ENCODE measurements at regions of chr17 and their contacts with region 1.

Region 1: DNA sequence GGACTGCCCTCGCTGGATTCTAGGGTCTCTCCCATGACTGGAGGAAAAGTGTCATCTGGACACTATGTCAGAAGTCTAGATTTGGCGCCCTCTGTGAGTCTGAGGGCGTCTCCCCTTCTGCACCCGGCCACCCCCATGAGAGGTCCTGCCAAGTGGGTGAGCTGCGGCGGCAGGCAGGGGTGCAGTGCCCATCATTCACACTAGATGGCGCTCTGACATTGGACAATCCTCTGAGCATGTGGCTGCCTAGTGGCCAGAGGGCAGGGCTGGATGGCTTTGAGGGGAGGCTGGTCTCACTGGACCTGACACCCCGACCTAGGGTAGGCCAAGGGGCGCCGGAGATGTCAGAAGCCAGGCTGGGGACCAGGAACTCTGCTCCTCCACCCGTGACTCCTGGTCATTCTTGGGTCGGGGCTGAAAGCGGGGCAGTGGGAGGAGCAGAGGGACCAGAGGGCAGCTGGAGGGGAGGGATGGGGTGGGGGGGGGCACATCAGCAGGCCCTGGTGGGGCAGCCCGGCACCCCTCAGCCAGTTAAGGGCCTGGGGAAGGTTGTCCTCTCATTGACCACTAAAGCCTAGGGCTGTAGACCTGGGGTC is 28.0 kb downstream of the MRM1 start:
- DNase-seq: peak; percentile 12
- ATAC-seq: peak; percentile 99
- H3K4me3 ChIP-seq: no peak overlapping the region
- H3K27ac ChIP-seq: no peak overlapping the region
- H3K4me1 ChIP-seq: no peaks in the 10 kb centered on the region
- H3K27me3 ChIP-seq: peaks cover 0 to 2% of the 10 kb centered on the region in 2 experiments; a peak in 2 of 4 replicates
- CTCF ChIP-seq: peak; percentile 98 to 99 (median 98); a peak in 5 of 6 replicates
- EP300 ChIP-seq: no peak
- POLR2A ChIP-seq: no peak
- RAD21 ChIP-seq: peak; percentile 92

Region 2: DNA sequence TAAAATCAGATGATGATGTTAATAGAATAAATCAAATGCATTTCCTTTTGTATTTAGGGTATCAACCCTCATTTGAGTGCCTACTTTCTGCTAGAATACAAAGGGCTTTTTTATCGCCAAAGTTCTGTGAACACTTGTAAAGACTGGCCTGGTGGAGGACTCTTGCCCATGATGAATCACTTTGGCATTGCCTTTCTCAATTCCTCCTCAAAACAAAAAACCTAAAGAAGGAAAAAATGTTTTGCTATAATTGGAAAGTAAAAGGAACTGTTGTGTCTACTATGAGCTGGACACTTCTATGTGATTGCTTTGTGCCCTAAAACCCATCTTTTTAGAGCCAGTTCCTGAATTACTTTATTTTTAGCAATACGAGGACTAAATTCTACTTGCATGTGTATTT is 50.7 kb before region 1 on chr17:
- CTCF ChIA-PET with region 1: no interaction called
- POLR2A ChIA-PET with region 1: no interaction called
- RAD21 ChIA-PET with region 1: no interaction called
- SMC1A ChIA-PET with region 1: no interaction called
- in situ Hi-C with region 1: no loop called
- intact Hi-C with region 1: no loop called
- DNase-seq: no peak
- ATAC-seq: no peak
- H3K4me3 ChIP-seq: no peak overlapping the region
- H3K27ac ChIP-seq: no peak overlapping the region
- H3K4me1 ChIP-seq: no peaks in the 10 kb centered on the region
- H3K27me3 ChIP-seq: no peaks in the 10 kb centered on the region
- CTCF ChIP-seq: no peak
- EP300 ChIP-seq: no peak
- POLR2A ChIP-seq: no peak
- RAD21 ChIP-seq: no peak

Region 3: GRCh38 chr17:36645422-36645821 is 16.1 kb after region 1 on chr17:
- CTCF ChIA-PET with region 1: no interaction called
- POLR2A ChIA-PET with region 1: no interaction called
- RAD21 ChIA-PET with region 1: no interaction called
- SMC1A ChIA-PET with region 1: no interaction called
- in situ Hi-C with region 1: no loop called
- intact Hi-C with region 1: no loop called
- DNase-seq: no peak
- ATAC-seq: no peak
- H3K4me3 ChIP-seq: no peak overlapping the region
- H3K27ac ChIP-seq: no peak overlapping the region
- H3K4me1 ChIP-seq: no peaks in the 10 kb centered on the region
- H3K27me3 ChIP-seq: peaks cover 7 to 18% of the 10 kb centered on the region in 2 experiments
- CTCF ChIP-seq: no peak
- EP300 ChIP-seq: no peak
- POLR2A ChIP-seq: no peak
- RAD21 ChIP-seq: no peak

Region 4: DNA sequence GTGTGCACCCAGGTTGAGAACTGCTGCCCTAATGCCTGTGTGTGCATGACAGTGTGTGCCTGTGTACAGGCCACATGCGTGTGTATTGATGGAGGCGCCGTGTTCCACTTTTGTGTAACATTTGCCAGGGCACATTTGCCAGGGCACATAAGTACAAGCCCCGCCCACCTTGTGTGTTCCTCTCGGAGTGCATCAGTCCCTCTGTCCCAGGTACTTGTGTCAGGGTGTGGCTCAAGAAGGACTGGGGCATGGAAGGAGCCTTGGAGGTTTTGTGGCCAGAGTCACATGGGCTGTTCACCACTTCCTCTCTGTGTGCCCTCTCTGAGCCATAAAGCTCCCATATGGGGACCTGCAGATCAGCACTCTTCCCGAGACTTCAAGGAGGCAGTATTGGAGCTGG is 45.9 kb after region 1 on chr17:
- CTCF ChIA-PET with region 1: no interaction called
- POLR2A ChIA-PET with region 1: no interaction called
- RAD21 ChIA-PET with region 1: no interaction called
- SMC1A ChIA-PET with region 1: interaction called, 4 read pairs
- in situ Hi-C with region 1: loop called (anchors 5 kb)
- intact Hi-C with region 1: no loop called
- DNase-seq: no peak
- ATAC-seq: 0 out of 3 replicates have a peak, but pooled peaks have one; percentile 30
- H3K4me3 ChIP-seq: no peak overlapping the region
- H3K27ac ChIP-seq: no peak overlapping the region
- H3K4me1 ChIP-seq: no peaks in the 10 kb centered on the region; the same call in 1 of the 2 replicates
- H3K27me3 ChIP-seq: no peaks in the 10 kb centered on the region; a peak in 2 of 4 replicates
- CTCF ChIP-seq: no peak
- EP300 ChIP-seq: no peak
- POLR2A ChIP-seq: no peak
- RAD21 ChIP-seq: no peak

Region 5: DNA sequence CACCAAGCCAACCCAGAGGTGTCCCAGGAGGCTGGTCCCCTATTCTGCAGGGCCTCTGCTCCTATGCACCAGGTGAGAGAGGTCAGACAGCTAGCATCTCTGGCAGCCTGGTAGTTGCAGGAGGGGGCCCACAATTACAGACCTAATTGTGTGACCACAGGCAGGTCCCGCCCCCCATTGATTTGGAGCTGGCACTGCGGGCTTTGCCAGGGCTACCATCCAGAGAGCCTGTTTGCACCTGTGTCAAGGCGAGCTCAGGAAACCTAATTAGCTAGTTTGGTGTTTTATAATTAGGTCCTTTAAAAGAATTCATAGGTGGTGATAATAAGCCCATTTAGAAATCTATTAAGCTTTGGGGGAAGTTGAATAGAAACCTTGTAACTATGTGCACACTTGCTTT is 62.3 kb after region 1 on chr17:
- CTCF ChIA-PET with region 1: no interaction called
- POLR2A ChIA-PET with region 1: no interaction called
- RAD21 ChIA-PET with region 1: no interaction called
- SMC1A ChIA-PET with region 1: no interaction called
- in situ Hi-C with region 1: no loop called
- intact Hi-C with region 1: no loop called
- DNase-seq: no peak
- ATAC-seq: no peak
- H3K4me3 ChIP-seq: no peak overlapping the region
- H3K27ac ChIP-seq: no peak overlapping the region
- H3K4me1 ChIP-seq: peaks cover 8% of the 10 kb centered on the region
- H3K27me3 ChIP-seq: no peaks in the 10 kb centered on the region; a peak in 2 of 4 replicates
- CTCF ChIP-seq: no peak
- EP300 ChIP-seq: no peak
- POLR2A ChIP-seq: no peak
- RAD21 ChIP-seq: no peak

Region 6: GRCh38 chr17:36705874-36706731 is 76.8 kb after region 1 on chr17:
- CTCF ChIA-PET with region 1: interaction called, 4 read pairs
- POLR2A ChIA-PET with region 1: no interaction called
- RAD21 ChIA-PET with region 1: no interaction called
- SMC1A ChIA-PET with region 1: no interaction called
- in situ Hi-C with region 1: loop called (anchors 5 kb)
- intact Hi-C with region 1: loop called (anchors 10 kb)
- DNase-seq: no peak
- ATAC-seq: peak; percentile 92
- H3K4me3 ChIP-seq: no peak overlapping the region
- H3K27ac ChIP-seq: no peak overlapping the region
- H3K4me1 ChIP-seq: no peaks in the 10 kb centered on the region
- H3K27me3 ChIP-seq: no peaks in the 10 kb centered on the region; a peak in 2 of 4 replicates
- CTCF ChIP-seq: peak; percentile 66 to 78 (median 78)
- EP300 ChIP-seq: no peak
- POLR2A ChIP-seq: no peak
- RAD21 ChIP-seq: peak; percentile 68

Region 7: GRCh38 chr17:36755586-36755985 is 126.2 kb after region 1 on chr17:
- CTCF ChIA-PET with region 1: interaction called, 8 read pairs
- POLR2A ChIA-PET with region 1: no interaction called
- RAD21 ChIA-PET with region 1: no interaction called
- SMC1A ChIA-PET with region 1: interaction called, 3 read pairs
- in situ Hi-C with region 1: no loop called
- intact Hi-C with region 1: loop called (anchors 5 kb)
- DNase-seq: no peak
- ATAC-seq: peak; percentile 48; the same call in 2 of the 3 replicates
- H3K4me3 ChIP-seq: no peak overlapping the region
- H3K27ac ChIP-seq: no peak overlapping the region
- H3K4me1 ChIP-seq: no peaks in the 10 kb centered on the region
- H3K27me3 ChIP-seq: no peaks in the 10 kb centered on the region; a peak in 1 of 4 replicates
- CTCF ChIP-seq: peak; percentile 39 to 49 (median 44); a peak in 5 of 6 replicates
- EP300 ChIP-seq: no peak
- POLR2A ChIP-seq: no peak
- RAD21 ChIP-seq: peak; percentile 33; the same call in 1 of the 2 replicates

Region 8: GRCh38 chr17:37047631-37048104 is 418.3 kb after region 1 on chr17:
- CTCF ChIA-PET with region 1: interaction called, 76 read pairs
- POLR2A ChIA-PET with region 1: no interaction called
- RAD21 ChIA-PET with region 1: interaction called, 17 read pairs
- SMC1A ChIA-PET with region 1: interaction called, 25 read pairs
- in situ Hi-C with region 1: loop called (anchors 25 kb)
- intact Hi-C with region 1: loop called (anchors 1 kb)
- DNase-seq: peak; percentile 17
- ATAC-seq: peak; percentile 95
- H3K4me3 ChIP-seq: no peak overlapping the region
- H3K27ac ChIP-seq: no peak overlapping the region
- H3K4me1 ChIP-seq: no peaks in the 10 kb centered on the region
- H3K27me3 ChIP-seq: no peaks in the 10 kb centered on the region
- CTCF ChIP-seq: peak; percentile 83 to 88 (median 85)
- EP300 ChIP-seq: no peak
- POLR2A ChIP-seq: no peak
- RAD21 ChIP-seq: peak; percentile 79

Region 9: GRCh38 chr17:37239690-37240334 is 610.5 kb after region 1 on chr17:
- CTCF ChIA-PET with region 1: interaction called, 25 read pairs
- POLR2A ChIA-PET with region 1: no interaction called
- RAD21 ChIA-PET with region 1: interaction called, 8 read pairs
- SMC1A ChIA-PET with region 1: interaction called, 7 read pairs
- in situ Hi-C with region 1: loop called (anchors 25 kb)
- intact Hi-C with region 1: loop called (anchors 5 kb)
- DNase-seq: no peak
- ATAC-seq: no peak
- H3K4me3 ChIP-seq: no peak overlapping the region
- H3K27ac ChIP-seq: no peak overlapping the region
- H3K4me1 ChIP-seq: no peaks in the 10 kb centered on the region
- H3K27me3 ChIP-seq: no peaks in the 10 kb centered on the region
- CTCF ChIP-seq: peak; percentile 43 to 67 (median 60); a peak in 5 of 6 replicates
- EP300 ChIP-seq: no peak
- POLR2A ChIP-seq: no peak
- RAD21 ChIP-seq: peak; percentile 53

Region 10: DNA sequence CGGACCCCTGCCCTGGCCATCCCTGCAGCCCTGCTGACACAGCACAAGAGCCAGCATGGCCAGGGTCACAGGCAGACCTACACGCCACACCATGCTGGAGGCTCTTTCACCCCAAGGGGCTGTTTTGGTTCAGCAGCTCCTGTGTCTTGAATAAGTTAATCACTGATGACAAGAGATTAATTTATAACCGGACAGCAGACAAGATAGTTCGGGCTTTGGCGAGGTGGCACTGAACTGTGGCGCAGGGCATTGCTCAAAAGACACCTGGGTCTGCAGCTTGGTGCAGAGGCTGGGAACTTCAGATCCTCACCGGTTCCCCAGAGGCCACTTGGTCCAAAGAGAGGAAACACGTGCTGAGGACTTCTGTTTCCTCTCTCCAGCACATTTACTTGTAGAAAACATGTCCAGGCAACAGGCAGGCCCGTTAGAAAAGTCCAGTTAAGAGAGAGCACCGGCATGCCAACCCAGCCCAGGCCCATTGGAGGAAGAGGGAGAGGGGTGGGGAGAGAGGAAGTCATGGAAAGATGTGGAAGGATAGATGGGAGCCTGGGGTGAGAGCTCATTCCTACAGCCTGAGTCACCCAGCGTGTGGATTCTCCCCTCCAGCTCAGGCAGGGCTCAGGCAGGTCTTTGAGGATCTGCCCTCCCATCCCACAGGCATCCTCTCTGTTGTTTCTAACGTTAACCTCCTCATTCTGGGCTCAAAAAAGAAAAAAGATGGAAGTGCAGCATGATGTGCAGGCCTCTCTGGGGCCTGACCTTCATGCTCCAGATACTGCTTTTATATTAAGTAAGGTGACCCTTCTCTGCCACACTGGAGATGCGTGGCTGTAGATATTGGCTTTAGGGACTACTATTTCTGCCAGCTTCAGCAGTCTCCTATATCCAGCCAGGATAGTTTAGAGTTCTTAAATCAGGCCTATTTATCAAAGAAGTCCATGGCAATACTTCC is 1195.5 kb after region 1 on chr17:
- CTCF ChIA-PET with region 1: no interaction called
- POLR2A ChIA-PET with region 1: no interaction called
- RAD21 ChIA-PET with region 1: no interaction called
- SMC1A ChIA-PET with region 1: no interaction called
- in situ Hi-C with region 1: loop called (anchors 25 kb)
- intact Hi-C with region 1: no loop called
- DNase-seq: no peak
- ATAC-seq: no peak; the same call in 1 of the 3 replicates
- H3K4me3 ChIP-seq: no peak overlapping the region
- H3K27ac ChIP-seq: no peak overlapping the region
- H3K4me1 ChIP-seq: peaks cover 52% of the 10 kb centered on the region
- H3K27me3 ChIP-seq: no peaks in the 10 kb centered on the region
- CTCF ChIP-seq: no peak
- EP300 ChIP-seq: no peak
- POLR2A ChIP-seq: no peak
- RAD21 ChIP-seq: no peak